ENCODE measurements at regions of chr9 and their contacts with region 1.

Region 1: DNA sequence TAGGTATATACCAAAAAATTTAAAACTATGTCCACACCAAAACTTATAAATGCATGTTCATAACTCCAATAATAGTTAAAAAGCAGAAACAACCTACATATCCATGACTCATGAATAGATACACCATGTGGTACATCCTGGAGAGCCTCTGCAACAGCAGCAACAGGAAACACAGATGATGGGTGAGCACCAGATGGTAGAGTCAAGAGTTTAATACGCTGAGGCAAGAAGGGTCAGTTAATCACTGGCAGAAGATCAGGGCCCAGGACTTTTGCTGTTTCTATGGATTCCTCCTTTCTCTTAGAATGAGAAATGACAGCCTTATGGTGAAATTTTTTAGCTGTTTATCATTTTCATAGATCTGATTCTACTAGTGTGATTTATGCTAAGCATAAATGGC is 351.8 kb upstream of the ADAMTSL1 start:
- DNase-seq: no peak

Region 2: GRCh38 chr9:18060245-18060934 is 61.8 kb before region 1 on chr9:
- intact Hi-C with region 1: loop called in 1 of 2 experiments (anchors 10 kb)
- DNase-seq: no peak